Activated CD8-positive, alpha-beta memory T cell treated with anti-CD3 and anti-CD28 coated beads, Interleukin-2, amount 10 ng/mL, durations not matched to agents 7 days and 5 days (primary cell): ENCODE measurements at regions of chr16 and their contacts with region 1.

Region 1: DNA sequence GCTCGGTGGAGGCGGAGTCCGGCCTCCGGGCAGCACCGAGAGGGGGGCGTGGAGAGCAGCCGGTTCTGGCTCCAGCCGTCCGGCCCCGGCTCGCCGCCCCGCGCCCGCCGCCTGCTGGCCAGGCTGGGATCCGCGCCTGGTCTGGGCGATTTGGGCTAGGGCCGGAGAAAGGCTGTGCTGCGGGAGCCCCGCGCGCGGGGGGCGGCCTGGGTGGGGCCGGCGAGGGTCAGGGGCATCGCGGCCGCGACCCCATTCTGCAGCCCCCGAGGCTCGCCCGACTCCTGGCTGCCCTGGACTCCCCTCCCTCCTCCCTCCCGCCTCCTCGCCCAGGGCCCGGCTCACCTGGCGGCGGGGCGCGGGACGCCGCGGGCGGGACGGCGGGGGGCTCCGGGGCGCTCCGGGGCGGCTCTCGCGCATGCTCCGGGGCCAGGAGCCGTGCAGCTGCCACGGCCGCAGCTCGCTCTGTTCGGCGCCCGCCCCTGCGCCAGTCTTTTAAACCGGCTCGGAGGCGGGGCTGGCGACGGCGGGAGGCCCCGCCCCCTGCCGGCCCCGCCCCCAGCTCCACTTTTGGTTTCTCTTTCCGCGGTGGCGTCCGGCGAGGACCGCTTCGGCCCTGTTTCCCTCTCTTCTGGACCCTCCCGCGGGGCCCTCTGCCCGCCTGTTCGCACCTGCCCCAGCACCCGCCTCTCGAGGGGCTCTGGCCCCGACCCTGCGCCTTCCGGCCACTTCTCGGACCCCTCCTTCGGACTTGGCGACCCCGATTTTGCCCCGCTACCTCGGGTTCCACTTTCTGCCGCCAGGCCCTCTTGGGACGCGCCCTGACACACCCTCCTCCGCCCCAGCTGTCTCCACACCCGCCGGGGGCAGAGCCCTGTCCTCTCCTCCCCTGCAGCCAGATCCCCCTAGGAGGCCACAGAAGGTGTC is at the start of gene SOCS1:
- DNase-seq: peak; percentile 91
- ATAC-seq: peak; percentile 66
- H3K4me3 Mint-ChIP-seq: peak within 1 kb of the TSS; percentile 99
- H3K27ac Mint-ChIP-seq: peak within 1 kb of the TSS; percentile 95
- H3K4me1 Mint-ChIP-seq: peaks cover 41% of the 10 kb centered on the region
- H3K27me3 Mint-ChIP-seq: peaks cover 12% of the 10 kb centered on the region
- total RNA-seq, gene SOCS1: 158 to 200 TPM

Region 2: DNA sequence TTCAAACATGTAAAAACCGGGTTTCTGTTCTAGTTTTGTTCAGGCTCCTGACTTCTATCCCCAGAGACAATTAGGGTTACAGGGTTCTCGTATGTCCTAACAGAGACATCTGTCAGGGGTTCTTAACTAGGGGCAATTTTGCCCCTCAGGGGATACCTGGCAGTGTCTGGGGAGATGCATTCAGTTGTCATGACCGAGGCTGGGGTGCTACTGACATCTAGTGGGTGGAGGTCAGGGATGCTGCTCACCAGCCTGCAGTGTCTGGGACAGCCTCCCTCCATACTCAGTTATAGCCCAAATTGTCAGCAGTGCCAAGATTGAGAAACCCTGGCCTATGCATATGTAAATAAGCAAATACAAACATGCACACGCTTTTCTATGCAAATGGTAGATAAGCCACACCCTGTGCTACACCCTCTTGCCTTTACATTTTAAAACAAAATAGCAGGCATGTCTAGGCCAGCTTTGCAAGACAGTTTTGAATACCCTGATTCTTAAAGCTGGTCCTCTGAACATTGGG is 274.2 kb before region 1 on chr16:
- CTCF ChIA-PET with region 1: interaction called, 257 read pairs
- DNase-seq: peak; percentile 87
- ATAC-seq: peak; percentile 89
- H3K4me3 Mint-ChIP-seq: peak overlapping the region; percentile 58
- H3K27ac Mint-ChIP-seq: peak overlapping the region; percentile 81
- H3K4me1 Mint-ChIP-seq: peaks cover 85% of the 10 kb centered on the region
- H3K27me3 Mint-ChIP-seq: no peaks in the 10 kb centered on the region

Region 3: GRCh38 chr16:11105038-11105903 is 150.7 kb before region 1 on chr16:
- CTCF ChIA-PET with region 1: interaction called, 27 read pairs
- DNase-seq: peak; percentile 65
- ATAC-seq: peak; percentile 57
- H3K4me3 Mint-ChIP-seq: no peak overlapping the region
- H3K27ac Mint-ChIP-seq: peak overlapping the region; percentile 84
- H3K4me1 Mint-ChIP-seq: peaks cover 80% of the 10 kb centered on the region
- H3K27me3 Mint-ChIP-seq: no peaks in the 10 kb centered on the region

Region 4: DNA sequence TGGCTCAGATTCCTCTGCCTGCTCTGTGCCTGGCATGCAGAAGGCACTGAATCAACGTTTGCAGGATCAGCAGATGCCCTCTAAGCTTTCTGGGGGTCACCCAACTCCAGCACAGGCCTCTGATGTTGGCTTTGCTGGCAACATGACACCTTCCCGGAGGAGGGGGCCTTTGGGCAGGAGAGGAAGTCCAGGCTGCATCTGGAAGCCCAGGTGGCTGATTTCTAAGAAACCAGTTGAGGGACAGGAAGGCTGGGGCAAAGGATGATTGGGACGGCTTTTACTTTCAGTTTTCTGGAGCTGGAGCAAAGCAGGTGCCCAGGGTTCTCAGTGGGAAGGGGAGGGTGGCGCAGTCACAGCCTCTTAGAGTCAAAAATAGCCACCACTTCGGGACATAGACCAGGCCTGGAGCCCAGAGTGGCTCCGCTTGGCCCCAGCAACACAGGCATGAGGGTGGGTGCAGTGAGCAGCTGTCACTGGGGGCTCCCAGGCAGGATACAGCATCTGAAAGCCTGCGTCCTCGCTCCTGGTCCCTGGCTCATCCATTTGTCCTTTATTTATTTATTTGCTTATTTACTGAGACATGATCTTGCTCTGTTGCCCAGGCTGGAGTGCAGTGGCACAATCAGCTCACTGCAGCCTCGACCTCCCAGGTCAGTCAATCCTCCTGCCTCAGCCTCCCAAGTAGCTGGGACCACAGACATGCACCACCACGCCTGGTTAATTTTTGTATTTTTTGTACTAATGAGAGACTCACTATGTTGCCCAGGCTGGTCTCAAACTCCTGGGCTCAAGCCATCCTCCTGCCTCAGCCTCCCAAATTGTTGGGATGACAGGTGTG is 15.1 kb before region 1 on chr16:
- CTCF ChIA-PET with region 1: interaction called, 30 read pairs
- DNase-seq: peak; percentile 59
- ATAC-seq: peak; percentile 60
- H3K4me3 Mint-ChIP-seq: peak overlapping the region; percentile 11
- H3K27ac Mint-ChIP-seq: no peak overlapping the region
- H3K4me1 Mint-ChIP-seq: peaks cover 26% of the 10 kb centered on the region
- H3K27me3 Mint-ChIP-seq: no peaks in the 10 kb centered on the region

Region 5: GRCh38 chr16:11291091-11291703 is 35.2 kb after region 1 on chr16:
- CTCF ChIA-PET with region 1: no interaction called
- DNase-seq: no peak
- ATAC-seq: no peak
- H3K4me3 Mint-ChIP-seq: no peak overlapping the region
- H3K27ac Mint-ChIP-seq: no peak overlapping the region
- H3K4me1 Mint-ChIP-seq: peaks cover 5% of the 10 kb centered on the region
- H3K27me3 Mint-ChIP-seq: peaks cover 69% of the 10 kb centered on the region

Region 6: DNA sequence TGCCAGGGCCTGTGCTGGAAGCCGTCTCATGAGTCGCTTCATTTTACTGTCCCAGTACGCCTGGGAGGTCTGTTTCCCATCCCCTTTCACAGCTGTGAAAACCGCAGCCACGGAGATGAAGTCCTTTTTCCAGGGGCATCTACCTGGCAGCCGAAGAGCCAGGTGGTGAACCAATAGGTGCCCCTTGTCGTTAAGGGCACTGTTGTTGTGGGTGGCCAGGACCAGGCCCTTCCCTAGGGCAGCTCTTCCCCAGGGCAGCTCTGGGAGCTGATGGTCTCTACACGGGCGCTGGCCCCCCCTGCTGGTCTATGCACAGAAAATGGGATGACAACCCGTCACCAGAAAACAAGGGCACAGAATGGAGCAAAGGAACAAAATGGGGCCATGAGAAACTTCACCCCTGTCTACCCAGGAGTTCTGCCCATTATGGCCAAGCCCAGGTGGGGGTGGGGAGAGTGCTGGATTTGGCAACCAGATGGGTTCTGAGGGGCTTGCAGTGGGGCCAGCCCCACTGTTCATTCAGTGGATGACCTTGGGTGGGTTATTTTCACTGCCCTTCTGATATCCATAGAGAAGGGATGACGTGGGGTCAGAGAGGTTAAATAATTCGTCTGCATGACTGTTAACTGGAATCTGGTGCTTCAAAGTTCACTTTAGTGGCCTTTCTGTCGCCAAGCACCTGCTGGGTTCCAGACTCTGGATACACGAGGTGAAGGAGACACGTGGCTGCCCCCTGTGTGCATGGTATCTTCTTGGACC is 100.8 kb after region 1 on chr16:
- CTCF ChIA-PET with region 1: interaction called, 49 read pairs
- DNase-seq: peak; percentile 70
- ATAC-seq: no peak
- H3K4me3 Mint-ChIP-seq: no peak overlapping the region
- H3K27ac Mint-ChIP-seq: no peak overlapping the region
- H3K4me1 Mint-ChIP-seq: peaks cover 69% of the 10 kb centered on the region
- H3K27me3 Mint-ChIP-seq: peaks cover 46% of the 10 kb centered on the region